CD4-positive, alpha-beta T cell (primary cell): ENCODE measurements at regions of chr1 and their contacts with region 1.

Region 1: DNA sequence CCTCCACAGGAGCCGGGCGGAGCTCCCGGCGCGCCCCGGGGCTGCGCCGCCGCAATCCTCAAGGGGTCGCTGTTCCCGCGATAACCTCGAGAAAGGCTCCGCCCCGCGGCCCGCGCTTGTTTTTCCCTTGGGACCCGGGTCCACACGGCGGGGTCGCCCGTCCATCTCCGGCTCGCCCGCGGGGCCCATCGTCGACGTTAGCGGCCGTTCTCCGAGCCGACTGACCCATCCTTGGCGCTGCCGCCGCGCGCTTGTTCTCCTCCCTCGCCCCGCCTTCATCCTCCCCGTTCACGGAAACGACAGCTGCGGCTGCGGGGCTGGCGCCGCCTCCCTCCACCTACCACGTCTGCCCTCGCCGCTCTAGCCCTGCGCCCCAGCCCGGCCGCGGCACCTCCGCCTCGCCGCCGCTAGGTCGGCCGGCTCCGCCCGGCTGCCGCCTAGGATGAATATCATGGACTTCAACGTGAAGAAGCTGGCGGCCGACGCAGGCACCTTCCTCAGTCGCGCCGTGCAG is at the start of gene SH3GLB1:
- DNase-seq: peak; percentile 83 to 95 (median 86)
- ATAC-seq: peak; percentile 89
- H3K4me3 ChIP-seq: peak within 1 kb of the TSS; percentile 68
- H3K4me3 Mint-ChIP-seq: peak within 1 kb of the TSS; percentile 99
- H3K27ac ChIP-seq: peak within 1 kb of the TSS; percentile 84 to 86
- H3K27ac Mint-ChIP-seq: peak within 1 kb of the TSS; percentile 99
- H3K4me1 ChIP-seq: peaks cover 18% of the 10 kb centered on the region
- H3K4me1 Mint-ChIP-seq: peaks cover 60% of the 10 kb centered on the region
- H3K27me3 ChIP-seq: no peaks in the 10 kb centered on the region
- H3K27me3 Mint-ChIP-seq: no peaks in the 10 kb centered on the region
- CTCF ChIP-seq: peak; percentile 98
- total RNA-seq, gene SH3GLB1: 50.6 to 52.3 TPM

Region 2: GRCh38 chr1:85707990-85708828 is 996.3 kb before region 1 on chr1 and contains the start of gene ZNHIT6:
- CTCF ChIA-PET with region 1: interaction called, 3 read pairs
- POLR2A ChIA-PET with region 1: interaction called, 7 read pairs
- intact Hi-C with region 1: loop called in 1 of 2 experiments (anchors 10 kb)
- DNase-seq: peak; percentile 72 to 96 (median 80)
- ATAC-seq: peak; percentile 96
- H3K4me3 ChIP-seq: peak within 1 kb of the TSS; percentile 89
- H3K4me3 Mint-ChIP-seq: no peak within 1 kb of the TSS
- H3K27ac ChIP-seq: peak within 1 kb of the TSS; percentile 46 to 49
- H3K27ac Mint-ChIP-seq: no peak within 1 kb of the TSS
- H3K4me1 ChIP-seq: peaks cover 24% of the 10 kb centered on the region
- H3K4me1 Mint-ChIP-seq: peaks cover 29% of the 10 kb centered on the region
- H3K27me3 ChIP-seq: no peaks in the 10 kb centered on the region
- H3K27me3 Mint-ChIP-seq: no peaks in the 10 kb centered on the region
- CTCF ChIP-seq: no peak
- total RNA-seq, gene ZNHIT6: 10.4 to 10.8 TPM

Region 3: GRCh38 chr1:86395771-86396497 is 308.6 kb before region 1 on chr1 and contains the start of gene ODF2L:
- CTCF ChIA-PET with region 1: interaction called, 10 read pairs
- POLR2A ChIA-PET with region 1: interaction called, 37 read pairs
- intact Hi-C with region 1: loop called in 1 of 2 experiments (anchors 10 kb)
- DNase-seq: peak; percentile 77 to 95 (median 84)
- ATAC-seq: peak; percentile 97
- H3K4me3 ChIP-seq: peak within 1 kb of the TSS; percentile 67
- H3K4me3 Mint-ChIP-seq: peak within 1 kb of the TSS; percentile 93
- H3K27ac ChIP-seq: peak within 1 kb of the TSS; percentile 75 to 89
- H3K27ac Mint-ChIP-seq: peak within 1 kb of the TSS; percentile 96
- H3K4me1 ChIP-seq: peaks cover 19% of the 10 kb centered on the region
- H3K4me1 Mint-ChIP-seq: peaks cover 69% of the 10 kb centered on the region
- H3K27me3 ChIP-seq: no peaks in the 10 kb centered on the region
- H3K27me3 Mint-ChIP-seq: no peaks in the 10 kb centered on the region
- CTCF ChIP-seq: no peak
- total RNA-seq, gene ODF2L: 68.1 to 71.2 TPM

Region 4: GRCh38 chr1:86741947-86742572 is 37.5 kb after region 1 on chr1:
- CTCF ChIA-PET with region 1: interaction called, 47 read pairs
- POLR2A ChIA-PET with region 1: interaction called, 26 read pairs
- intact Hi-C with region 1: loop called in 1 of 2 experiments (anchors 1 kb)
- DNase-seq: peak in 12 of 14 experiments; percentile 13 to 74 (median 30)
- ATAC-seq: no peak
- H3K4me3 ChIP-seq: no peak overlapping the region
- H3K4me3 Mint-ChIP-seq: no peak overlapping the region
- H3K27ac ChIP-seq: no peak overlapping the region
- H3K27ac Mint-ChIP-seq: no peak overlapping the region
- H3K4me1 ChIP-seq: peaks cover 7% of the 10 kb centered on the region
- H3K4me1 Mint-ChIP-seq: peaks cover 4% of the 10 kb centered on the region
- H3K27me3 ChIP-seq: no peaks in the 10 kb centered on the region
- H3K27me3 Mint-ChIP-seq: no peaks in the 10 kb centered on the region
- CTCF ChIP-seq: peak; percentile 75

Region 5: GRCh38 chr1:86811142-86811924 is 106.8 kb after region 1 on chr1:
- CTCF ChIA-PET with region 1: no interaction called
- POLR2A ChIA-PET with region 1: no interaction called
- intact Hi-C with region 1: no loop called
- DNase-seq: no peak
- ATAC-seq: no peak
- H3K4me3 ChIP-seq: no peak overlapping the region
- H3K4me3 Mint-ChIP-seq: no peak overlapping the region
- H3K27ac ChIP-seq: no peak overlapping the region
- H3K27ac Mint-ChIP-seq: no peak overlapping the region
- H3K4me1 ChIP-seq: no peaks in the 10 kb centered on the region
- H3K4me1 Mint-ChIP-seq: no peaks in the 10 kb centered on the region
- H3K27me3 ChIP-seq: no peaks in the 10 kb centered on the region
- H3K27me3 Mint-ChIP-seq: peaks cover 8% of the 10 kb centered on the region
- CTCF ChIP-seq: no peak

Region 6: GRCh38 chr1:87084244-87084836 is 379.8 kb after region 1 on chr1:
- CTCF ChIA-PET with region 1: interaction called, 3 read pairs
- POLR2A ChIA-PET with region 1: interaction called, 5 read pairs
- intact Hi-C with region 1: loop called in 1 of 2 experiments (anchors 10 kb)
- DNase-seq: peak in 3 of 14 experiments; percentile 46 to 53 (median 53)
- ATAC-seq: peak; percentile 39
- H3K4me3 ChIP-seq: no peak overlapping the region
- H3K4me3 Mint-ChIP-seq: no peak overlapping the region
- H3K27ac ChIP-seq: no peak overlapping the region
- H3K27ac Mint-ChIP-seq: peak overlapping the region; percentile 17
- H3K4me1 ChIP-seq: no peaks in the 10 kb centered on the region
- H3K4me1 Mint-ChIP-seq: no peaks in the 10 kb centered on the region
- H3K27me3 ChIP-seq: no peaks in the 10 kb centered on the region
- H3K27me3 Mint-ChIP-seq: no peaks in the 10 kb centered on the region
- CTCF ChIP-seq: peak; percentile 79